Activated naive CD4-positive, alpha-beta T cell treated with anti-CD3 and anti-CD28 coated beads for 36 hours (primary cell): ENCODE measurements at regions of chr2 and their contacts with region 1.

Region 1: DNA sequence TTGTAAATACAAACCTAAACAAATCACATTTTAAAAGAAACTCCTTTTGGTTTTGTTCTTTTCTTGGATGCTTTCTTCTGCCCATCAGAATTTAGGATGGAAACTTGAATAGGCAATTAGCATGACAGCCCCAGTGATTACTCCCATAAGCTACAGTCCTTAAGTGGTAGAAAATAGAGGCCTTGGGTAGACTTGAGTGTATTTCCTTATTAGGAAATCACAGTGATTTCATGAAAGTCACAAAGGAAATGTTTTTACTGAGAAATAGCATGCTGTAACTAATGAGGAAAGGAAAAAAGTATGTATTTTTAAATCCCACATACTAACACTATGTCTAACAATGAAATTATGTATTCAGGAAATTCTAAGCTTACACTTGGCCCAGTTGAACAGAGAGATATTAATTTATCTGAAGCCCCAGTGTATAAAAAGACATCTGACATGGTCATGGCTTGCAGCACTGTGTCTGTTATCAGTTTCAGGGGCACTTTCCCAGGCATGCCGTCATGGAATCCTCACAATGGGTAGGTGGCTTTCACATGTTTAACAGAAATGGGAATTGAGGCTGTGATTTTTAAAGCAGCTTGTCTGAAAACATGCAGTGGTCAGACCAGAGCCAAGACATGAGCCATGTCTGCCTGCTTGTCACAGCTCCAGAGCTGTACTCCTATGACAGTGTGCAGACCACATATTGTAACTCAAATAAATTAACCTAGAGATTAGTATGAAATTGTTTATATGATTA is 79.7 kb upstream of the TRIB2 start:
- DNase-seq: no peak
- H3K4me3 Mint-ChIP-seq: no peak overlapping the region
- H3K27ac Mint-ChIP-seq: no peak overlapping the region
- H3K4me1 Mint-ChIP-seq: peaks cover 25% of the 10 kb centered on the region
- H3K27me3 Mint-ChIP-seq: no peaks in the 10 kb centered on the region

Region 2: DNA sequence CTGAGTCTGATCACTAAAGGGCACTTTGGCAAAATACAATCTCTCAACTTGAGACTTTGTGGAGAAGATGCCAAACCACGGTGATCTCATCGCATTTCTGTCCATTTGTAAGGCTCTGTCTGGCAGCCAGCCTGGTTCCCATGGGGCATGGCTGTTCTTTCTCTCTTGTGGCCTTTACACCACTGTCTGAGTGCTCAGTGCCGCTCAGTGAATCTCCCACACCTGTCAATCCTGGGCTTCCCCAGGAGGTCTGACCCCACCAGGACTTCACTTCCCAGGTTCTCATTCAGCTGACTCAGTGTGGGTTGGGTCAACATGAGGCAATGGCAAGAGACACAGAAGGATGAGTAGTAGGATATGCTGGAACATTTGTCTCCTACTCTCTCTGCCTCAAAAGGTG is 17.0 kb before region 1 on chr2:
- CTCF ChIA-PET with region 1: no interaction called
- intact Hi-C with region 1: no loop called
- DNase-seq: no peak
- H3K4me3 Mint-ChIP-seq: no peak overlapping the region
- H3K27ac Mint-ChIP-seq: peak overlapping the region; percentile 36
- H3K4me1 Mint-ChIP-seq: peaks cover 15% of the 10 kb centered on the region
- H3K27me3 Mint-ChIP-seq: no peaks in the 10 kb centered on the region

Region 3: GRCh38 chr2:12702305-12703121 is 65.5 kb after region 1 on chr2:
- CTCF ChIA-PET with region 1: no interaction called
- intact Hi-C with region 1: loop called (anchors 2 kb)
- DNase-seq: no peak
- H3K4me3 Mint-ChIP-seq: no peak overlapping the region
- H3K27ac Mint-ChIP-seq: no peak overlapping the region
- H3K4me1 Mint-ChIP-seq: peaks cover 41% of the 10 kb centered on the region
- H3K27me3 Mint-ChIP-seq: no peaks in the 10 kb centered on the region